Left cardiac atrium (tissue), 4 donors: ENCODE measurements at regions of chr21 and their contacts with region 1.

Region 1: GRCh38 chr21:41289426-41289825 is 27.2 kb upstream of the FAM3B start:
- DNase-seq: no peak
- ATAC-seq: no peak

Region 2: GRCh38 chr21:40902299-40902698 is 387.1 kb before region 1 on chr21:
- intact Hi-C with region 1: no loop called
- DNase-seq: no peak
- ATAC-seq: peak in 1 of 2 donors; percentile 27

Region 3: DNA sequence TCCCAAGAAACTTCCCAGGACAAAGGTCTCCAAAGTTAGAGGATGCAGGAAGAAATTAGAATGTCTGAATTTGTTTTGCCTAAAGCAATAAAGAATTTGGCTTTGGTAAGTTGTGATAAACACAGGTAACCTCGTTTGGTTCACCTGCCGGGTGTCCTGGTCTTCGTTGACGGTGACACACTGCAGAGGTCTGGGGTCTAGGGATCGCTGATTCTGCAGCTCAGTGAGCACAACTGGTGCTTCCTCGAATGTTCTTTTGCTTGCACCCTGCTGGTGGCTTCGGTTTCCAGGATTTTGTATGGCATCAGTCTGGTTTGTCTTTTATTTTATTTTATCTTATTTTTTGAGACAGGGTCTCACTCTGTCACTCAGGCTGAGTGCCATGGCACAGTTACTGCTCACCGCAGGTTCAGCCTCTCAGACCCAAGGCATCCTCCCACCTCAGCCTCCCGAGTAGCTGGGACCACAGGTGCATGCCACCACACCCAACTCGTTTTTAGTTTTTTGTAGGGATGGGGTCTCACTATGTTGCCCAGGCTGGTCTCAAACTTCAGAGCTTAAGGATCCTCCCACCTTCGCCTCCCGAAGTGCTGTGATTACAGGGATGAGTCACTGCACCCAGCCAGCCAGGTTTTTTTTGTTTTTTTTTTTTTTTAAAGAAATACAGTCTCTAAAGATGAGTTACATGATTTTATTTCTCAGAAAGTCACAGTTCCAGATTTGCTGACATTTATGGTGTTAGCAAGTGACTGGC is 92.6 kb before region 1 on chr21:
- intact Hi-C with region 1: no loop called
- DNase-seq: no peak
- ATAC-seq: peak in 1 of 2 donors; percentile 40

Region 4: DNA sequence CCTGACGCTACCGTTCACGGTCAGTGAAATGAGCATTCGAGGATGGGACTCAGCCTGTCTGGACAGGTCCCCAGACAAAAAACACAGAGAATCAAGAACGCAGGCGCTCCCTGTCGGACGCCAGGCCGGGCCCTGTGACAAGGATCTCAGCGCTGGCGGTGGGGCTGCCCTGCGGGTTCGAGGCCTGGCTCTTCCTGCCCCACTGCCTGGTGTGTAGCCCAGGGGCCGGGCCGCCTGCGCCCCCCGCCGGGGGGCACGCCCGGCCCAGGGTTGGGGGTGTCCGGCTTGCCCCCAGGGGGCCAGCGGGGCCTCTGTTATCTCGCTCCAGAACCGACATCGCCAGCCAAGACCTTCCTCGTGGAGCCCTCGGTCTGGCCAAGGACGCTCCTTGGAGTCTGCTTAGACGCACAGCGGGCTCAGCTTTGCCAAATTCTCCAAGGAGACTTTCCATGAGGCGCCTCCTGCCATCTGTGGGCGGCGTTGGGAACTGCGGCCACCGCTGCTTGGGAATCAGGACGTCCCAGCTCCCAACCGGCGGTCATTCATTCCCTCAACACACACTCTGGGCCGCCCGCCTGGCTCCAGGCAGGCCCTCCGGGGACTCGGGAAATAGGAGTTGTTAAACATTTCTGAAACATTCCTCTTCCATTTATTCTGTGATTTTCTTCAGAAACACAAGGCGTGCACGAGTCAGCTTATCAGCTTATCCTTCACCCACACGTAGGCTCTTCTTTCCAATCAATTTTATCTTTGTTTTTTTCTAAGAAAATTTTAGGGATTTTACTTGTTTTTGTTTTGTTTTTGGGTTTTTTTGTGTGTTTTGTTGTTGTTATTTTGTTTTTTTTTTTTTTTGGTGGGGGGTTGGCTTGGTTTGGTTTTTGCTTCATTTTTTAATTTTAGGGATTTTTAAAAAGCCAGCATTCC is 488.8 kb after region 1 on chr21:
- intact Hi-C with region 1: loop called in 1 of 2 experiments (anchors 5 kb)
- DNase-seq: peak; percentile 91
- ATAC-seq: peak; percentile 96 to 97